WTC11 (cell line): ENCODE measurements at regions of chr13 and their contacts with region 1.

Region 1: GRCh38 chr13:21326155-21327031 is 132.7 kb downstream of the ZDHHC20 start:
- DNase-seq: peak; percentile 86
- ATAC-seq: peak; percentile 75
- H3K4me3 Mint-ChIP-seq: peak overlapping the region; percentile 60
- H3K27ac Mint-ChIP-seq: peak overlapping the region; percentile 87
- H3K4me1 Mint-ChIP-seq: peaks cover 56% of the 10 kb centered on the region
- H3K27me3 Mint-ChIP-seq: peaks cover 34% of the 10 kb centered on the region
- CTCF ChIP-seq: no peak

Region 2: DNA sequence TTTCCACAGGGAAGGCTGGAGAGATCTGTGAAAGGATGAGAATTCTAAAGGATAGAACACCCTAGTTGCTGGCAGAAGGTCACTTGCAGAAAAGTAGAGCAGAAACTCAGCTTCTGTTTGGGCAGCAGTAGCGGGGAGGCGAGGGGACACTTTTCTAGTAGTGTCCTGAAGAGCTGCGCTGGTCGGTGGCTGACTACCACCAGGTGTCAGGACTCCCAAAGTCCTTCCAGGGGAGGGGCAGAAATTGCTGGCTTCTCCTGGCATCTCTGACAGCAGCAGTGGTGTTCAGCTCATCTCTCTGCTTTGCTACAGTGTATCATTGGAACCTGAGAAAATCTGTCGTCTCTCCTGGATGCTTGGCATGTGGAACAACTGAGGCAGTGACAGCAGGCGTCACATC is 11.8 kb after region 1 on chr13:
- CTCF ChIA-PET with region 1: interaction called, 13 read pairs
- POLR2A ChIA-PET with region 1: interaction called, 6 read pairs
- DNase-seq: no peak
- ATAC-seq: peak; percentile 65
- H3K4me3 Mint-ChIP-seq: no peak overlapping the region
- H3K27ac Mint-ChIP-seq: no peak overlapping the region
- H3K4me1 Mint-ChIP-seq: peaks cover 41% of the 10 kb centered on the region
- H3K27me3 Mint-ChIP-seq: no peaks in the 10 kb centered on the region; the same call in 1 of the 2 replicates
- CTCF ChIP-seq: no peak